HepG2 (cell line): ENCODE measurements at regions of chr16 and their contacts with region 1.

Region 1: DNA sequence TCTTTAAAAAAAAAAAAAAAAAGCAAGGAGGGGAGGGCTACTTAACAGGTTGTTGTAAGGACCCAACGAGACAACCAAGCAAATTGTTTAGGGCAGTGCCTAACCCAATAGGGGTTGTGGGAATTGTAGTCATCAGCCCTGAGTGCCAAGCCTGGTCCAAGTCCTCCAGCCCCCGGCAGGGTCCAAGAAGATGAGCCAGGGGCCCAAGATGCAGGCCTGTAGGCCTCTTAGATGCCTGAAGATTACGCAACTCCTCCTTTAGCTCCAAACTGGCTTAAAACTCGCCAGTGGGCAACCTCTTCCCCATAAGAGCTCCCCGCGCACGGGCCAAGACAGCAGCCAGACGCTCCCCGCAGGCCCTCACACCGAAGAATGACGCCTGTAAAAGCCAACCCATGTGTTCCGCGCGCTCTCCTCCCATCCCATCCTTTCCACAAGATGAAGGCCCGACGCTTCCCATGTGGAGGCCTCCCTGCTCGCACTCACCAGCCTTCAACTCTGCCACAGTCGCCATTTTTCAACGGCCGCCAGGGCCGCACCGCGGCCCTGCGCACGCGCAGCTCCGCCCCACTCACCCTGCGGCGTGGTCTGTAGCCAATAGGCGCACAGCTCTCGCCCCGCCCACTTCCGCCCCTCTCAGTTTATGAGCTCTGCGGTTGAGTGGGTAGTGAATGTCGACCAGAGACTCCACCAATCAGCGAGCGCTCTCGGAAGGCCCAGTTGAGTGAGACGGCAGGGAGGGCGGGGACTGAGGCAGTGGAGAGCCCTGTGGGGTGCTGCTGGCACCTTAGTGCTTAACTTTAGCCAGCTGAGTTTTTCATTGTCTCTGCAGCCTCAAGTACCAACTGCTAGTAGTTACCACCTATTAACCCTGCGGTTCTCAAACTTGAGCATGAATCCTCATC is at the start of gene CEP20:
- DNase-seq: peak; percentile 100
- ATAC-seq: peak; percentile 100
- H3K4me3 ChIP-seq: peak within 1 kb of the TSS; percentile 92 to 99 (median 93)
- H3K27ac ChIP-seq: peak within 1 kb of the TSS; percentile 79
- H3K4me1 ChIP-seq: peaks cover 45% of the 10 kb centered on the region
- H3K27me3 ChIP-seq: peaks cover 0 to 4% of the 10 kb centered on the region in 2 experiments; a peak in 1 of 5 replicates
- CTCF ChIP-seq: no peak
- EP300 ChIP-seq: 0 out of 4 replicates have a peak, but pooled peaks of 1 of the 2 experiments have one; percentile 10
- POLR2A ChIP-seq: peak; percentile 93 to 98
- RAD21 ChIP-seq: peak; percentile 63; the same call in 1 of the 2 replicates
- total RNA-seq, gene CEP20: 54.1 and 84.4 TPM in 2 replicates

Region 2: DNA sequence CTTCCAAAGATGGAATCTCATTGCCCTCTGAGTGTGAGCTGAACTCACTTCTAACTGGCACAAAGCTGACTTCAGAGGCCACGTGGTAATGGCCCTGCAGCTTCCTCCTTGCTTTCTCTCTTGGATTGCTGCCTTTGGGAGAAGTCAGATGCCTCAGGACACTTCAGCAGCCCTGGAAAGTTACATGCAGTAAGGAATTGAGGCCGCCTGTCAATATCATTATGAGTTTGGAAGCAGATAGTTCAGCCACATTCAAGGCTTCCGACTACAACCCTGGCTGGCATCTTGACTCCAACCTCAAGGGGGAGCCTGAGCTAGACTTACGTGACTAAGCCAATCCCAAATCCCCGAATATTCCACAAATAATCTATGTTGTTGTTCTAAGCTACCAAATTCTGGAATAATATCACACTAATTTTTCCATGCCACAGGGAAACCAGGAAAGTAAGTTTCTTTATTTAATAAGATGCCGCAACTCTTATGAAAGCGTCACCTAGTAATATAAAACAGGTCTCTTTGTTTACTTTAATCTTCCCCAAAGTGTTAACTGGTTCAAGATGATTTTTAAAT is 13.5 kb before region 1 on chr16:
- CTCF ChIA-PET with region 1: no interaction called
- POLR2A ChIA-PET with region 1: interaction called, 24 read pairs
- in situ Hi-C with region 1: no loop called
- intact Hi-C with region 1: no loop called
- DNase-seq: peak; percentile 70
- ATAC-seq: peak; percentile 95
- H3K4me3 ChIP-seq: no peak overlapping the region
- H3K27ac ChIP-seq: no peak overlapping the region
- H3K4me1 ChIP-seq: peaks cover 7% of the 10 kb centered on the region
- H3K27me3 ChIP-seq: no peaks in the 10 kb centered on the region
- CTCF ChIP-seq: peak; percentile 86
- EP300 ChIP-seq: no peak
- POLR2A ChIP-seq: no peak
- RAD21 ChIP-seq: peak; percentile 83

Region 3: GRCh38 chr16:15899538-15900100 is 11.3 kb after region 1 on chr16:
- CTCF ChIA-PET with region 1: no interaction called
- POLR2A ChIA-PET with region 1: interaction called, 72 read pairs
- in situ Hi-C with region 1: no loop called
- intact Hi-C with region 1: no loop called
- DNase-seq: peak; percentile 95
- ATAC-seq: peak; percentile 95
- H3K4me3 ChIP-seq: no peak overlapping the region
- H3K27ac ChIP-seq: peak overlapping the region; percentile 3
- H3K4me1 ChIP-seq: peaks cover 62% of the 10 kb centered on the region
- H3K27me3 ChIP-seq: no peaks in the 10 kb centered on the region
- CTCF ChIP-seq: 0 out of 2 replicates have a peak, but pooled peaks have one; percentile 4
- EP300 ChIP-seq: peak in 1 of 2 experiments; percentile 79; a peak in 2 of 4 replicates
- POLR2A ChIP-seq: no peak
- RAD21 ChIP-seq: 0 out of 2 replicates have a peak, but pooled peaks have one; percentile 25

Region 4: DNA sequence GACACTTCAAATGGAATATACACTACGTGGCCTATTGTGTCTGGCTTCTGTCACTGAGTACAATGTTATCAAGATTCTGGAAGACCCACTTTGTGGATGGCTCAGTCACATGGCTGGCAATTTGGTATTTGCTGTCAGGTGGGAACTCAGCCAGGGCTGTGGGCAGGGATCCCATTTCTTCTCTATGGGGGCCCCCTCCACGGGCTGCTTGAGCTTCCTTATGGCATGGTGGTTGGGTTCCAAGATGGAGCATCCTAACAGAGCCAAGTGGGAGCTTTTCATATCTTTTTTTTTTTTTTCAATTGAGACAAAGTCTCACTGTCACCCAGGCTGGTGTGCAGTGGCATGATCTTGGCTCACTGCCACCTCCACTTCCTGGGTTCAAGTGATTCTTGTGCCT is 18.1 kb after region 1 on chr16:
- CTCF ChIA-PET with region 1: no interaction called
- POLR2A ChIA-PET with region 1: interaction called, 12 read pairs
- in situ Hi-C with region 1: no loop called
- intact Hi-C with region 1: no loop called
- DNase-seq: no peak
- ATAC-seq: no peak
- H3K4me3 ChIP-seq: no peak overlapping the region
- H3K27ac ChIP-seq: no peak overlapping the region
- H3K4me1 ChIP-seq: peaks cover 25% of the 10 kb centered on the region
- H3K27me3 ChIP-seq: no peaks in the 10 kb centered on the region
- CTCF ChIP-seq: no peak
- EP300 ChIP-seq: no peak
- POLR2A ChIP-seq: no peak
- RAD21 ChIP-seq: no peak

Region 5: DNA sequence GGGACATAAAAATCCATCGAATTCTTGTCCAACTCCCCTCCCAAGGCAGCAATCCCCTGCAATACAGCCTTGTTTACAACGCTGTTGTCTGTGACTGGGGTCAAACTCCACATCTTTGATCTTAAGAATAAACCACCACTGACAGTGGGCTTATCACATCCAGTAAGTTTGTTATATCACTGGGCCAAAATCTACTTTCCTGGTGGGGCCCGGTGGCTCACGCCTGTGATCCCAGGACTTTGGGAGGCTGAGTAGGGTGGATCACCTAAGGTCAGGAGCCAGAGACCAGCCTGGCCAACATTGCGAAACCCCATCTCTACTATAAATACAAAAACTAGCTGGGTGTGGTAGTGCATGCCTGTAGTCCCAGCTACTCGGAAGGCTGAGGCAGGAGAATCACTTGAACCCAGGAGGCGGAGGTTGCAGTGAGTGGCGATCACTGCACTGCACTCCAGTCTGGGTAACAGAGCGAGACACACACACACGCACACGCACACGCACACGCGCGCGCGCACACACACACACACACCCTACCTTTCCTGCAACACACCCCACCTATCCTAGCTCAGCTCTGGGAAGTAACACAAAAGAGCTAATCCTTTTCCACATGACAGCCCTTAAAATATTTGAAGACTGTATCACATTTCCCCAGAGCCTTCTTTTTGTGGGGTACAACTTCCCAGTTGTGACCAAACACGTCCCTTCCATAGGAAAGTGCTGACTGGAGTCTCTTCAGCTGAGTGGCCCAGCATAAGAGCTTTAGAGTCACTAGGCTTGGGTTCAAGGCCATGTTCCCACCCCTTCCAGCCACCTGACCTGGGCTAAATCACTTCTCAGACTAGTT is 40.2 kb after region 1 on chr16:
- CTCF ChIA-PET with region 1: no interaction called
- POLR2A ChIA-PET with region 1: interaction called, 13 read pairs
- in situ Hi-C with region 1: no loop called
- intact Hi-C with region 1: loop called (anchors 5 kb)
- DNase-seq: peak; percentile 73
- ATAC-seq: peak; percentile 86
- H3K4me3 ChIP-seq: peak overlapping the region in 1 of 3 experiments; percentile 26; a peak in 1 of 6 replicates
- H3K27ac ChIP-seq: no peak overlapping the region
- H3K4me1 ChIP-seq: peaks cover 31% of the 10 kb centered on the region
- H3K27me3 ChIP-seq: 0 out of 5 replicates have a peak, but pooled peaks cover 0 to 4% of the 10 kb centered on the region in 2 experiments
- CTCF ChIP-seq: no peak
- EP300 ChIP-seq: peak; percentile 54 to 57; a peak in 2 of 4 replicates
- POLR2A ChIP-seq: no peak
- RAD21 ChIP-seq: 0 out of 2 replicates have a peak, but pooled peaks have one; percentile 6

Region 6: DNA sequence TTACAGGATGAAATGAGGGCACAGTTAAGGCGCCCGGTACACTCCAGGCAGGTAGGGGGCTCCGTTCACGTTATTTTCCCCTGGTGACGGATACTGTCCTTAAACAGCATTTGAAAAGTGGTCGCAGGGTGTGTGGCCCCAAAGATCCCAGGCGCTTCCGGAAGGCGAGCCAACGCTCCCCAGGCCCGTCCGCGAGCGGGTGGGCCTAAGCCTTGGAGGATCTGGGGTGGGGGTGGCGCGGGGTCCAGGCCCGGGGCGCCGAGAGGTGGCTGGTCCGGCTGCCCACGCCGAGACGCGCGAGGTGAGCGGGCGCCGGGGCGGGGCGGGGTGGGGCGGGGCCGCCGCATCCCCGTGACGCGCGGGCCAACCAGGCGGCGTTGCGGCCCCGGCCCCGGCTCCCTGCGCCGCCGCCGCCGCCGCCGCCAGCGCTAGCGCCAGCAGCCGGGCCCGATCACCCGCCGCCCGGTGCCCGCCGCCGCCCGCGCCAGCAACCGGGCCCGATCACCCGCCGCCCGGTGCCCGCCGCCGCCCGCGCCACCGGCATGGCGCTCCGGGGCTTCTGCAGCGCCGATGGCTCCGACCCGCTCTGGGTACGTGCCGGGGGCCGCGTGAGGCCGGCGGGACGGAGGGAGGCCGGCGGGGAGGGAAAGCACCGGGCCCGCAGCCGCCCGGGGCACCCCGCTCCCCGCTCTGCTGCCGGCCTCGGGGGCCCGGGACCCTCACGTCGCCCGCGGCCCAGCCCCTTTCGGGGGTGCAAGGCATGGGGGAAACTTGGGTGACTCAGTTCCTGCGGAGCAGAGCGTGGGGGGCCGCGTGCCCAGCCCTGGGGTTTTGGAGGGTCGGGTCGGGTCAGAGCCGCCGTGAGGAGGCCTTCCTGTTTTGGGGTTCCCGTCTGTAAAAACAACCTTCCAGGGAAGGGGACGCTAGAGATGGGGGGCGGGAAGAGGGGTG is 61.2 kb after region 1 on chr16 and contains the start of gene ABCC1:
- CTCF ChIA-PET with region 1: no interaction called
- POLR2A ChIA-PET with region 1: interaction called, 22 read pairs
- in situ Hi-C with region 1: no loop called
- intact Hi-C with region 1: no loop called
- DNase-seq: peak; percentile 60
- ATAC-seq: peak; percentile 59
- H3K4me3 ChIP-seq: peak within 1 kb of the TSS; percentile 90 to 94 (median 94)
- H3K27ac ChIP-seq: peak within 1 kb of the TSS; percentile 36
- H3K4me1 ChIP-seq: peaks cover 66% of the 10 kb centered on the region
- H3K27me3 ChIP-seq: no peaks in the 10 kb centered on the region; a peak in 1 of 5 replicates
- CTCF ChIP-seq: peak; percentile 40
- EP300 ChIP-seq: no peak
- POLR2A ChIP-seq: peak; percentile 19 to 58; a peak in 2 of 4 replicates
- RAD21 ChIP-seq: no peak
- total RNA-seq, gene ABCC1: 10.2 and 13.0 TPM in 2 replicates

Region 7: GRCh38 chr16:15996432-15997109 is 108.2 kb after region 1 on chr16:
- CTCF ChIA-PET with region 1: no interaction called
- POLR2A ChIA-PET with region 1: interaction called, 25 read pairs
- in situ Hi-C with region 1: no loop called
- intact Hi-C with region 1: no loop called
- DNase-seq: peak; percentile 99
- ATAC-seq: peak; percentile 85
- H3K4me3 ChIP-seq: 0 out of 6 replicates have a peak overlapping the region, but pooled peaks of 1 of the 3 experiments have one; percentile 1
- H3K27ac ChIP-seq: peak overlapping the region; percentile 7
- H3K4me1 ChIP-seq: peaks cover 41% of the 10 kb centered on the region
- H3K27me3 ChIP-seq: no peaks in the 10 kb centered on the region
- CTCF ChIP-seq: peak; percentile 72
- EP300 ChIP-seq: peak; percentile 64 to 86; a peak in 3 of 4 replicates
- POLR2A ChIP-seq: no peak
- RAD21 ChIP-seq: peak; percentile 79; the same call in 1 of the 2 replicates